Caco-2 (cell line): ENCODE measurements at regions of chr1 and their contacts with region 1.

Region 1: GRCh38 chr1:52404116-52404986 is at the starts of genes ORC1 and PRPF38A:
- DNase-seq: peak; percentile 93 to 94
- H3K4me3 ChIP-seq: peak within 1 kb of the TSS; percentile 60
- H3K4me3 Mint-ChIP-seq: peak within 1 kb of the TSS; percentile 87
- H3K27ac Mint-ChIP-seq: peak within 1 kb of the TSS; percentile 91
- H3K4me1 ChIP-seq: peaks cover 17% of the 10 kb centered on the region
- H3K4me1 Mint-ChIP-seq: no peaks in the 10 kb centered on the region
- H3K27me3 ChIP-seq: no peaks in the 10 kb centered on the region
- H3K27me3 Mint-ChIP-seq: no peaks in the 10 kb centered on the region
- CTCF ChIP-seq: peak; percentile 45 to 75
- total RNA-seq, gene ORC1: 12.1 and 14.0 TPM in 2 replicates
- total RNA-seq, gene PRPF38A: 40.4 and 43.1 TPM in 2 replicates

Region 2: GRCh38 chr1:52365746-52366516 is 38.4 kb before region 1 on chr1 and contains the start of gene CC2D1B:
- CTCF ChIA-PET with region 1: interaction called, 5 read pairs
- POLR2A ChIA-PET with region 1: interaction called, 5 read pairs
- intact Hi-C with region 1: loop called (anchors 1 kb)
- DNase-seq: peak; percentile 99
- H3K4me3 ChIP-seq: peak within 1 kb of the TSS; percentile 83
- H3K4me3 Mint-ChIP-seq: peak within 1 kb of the TSS; percentile 96
- H3K27ac Mint-ChIP-seq: peak within 1 kb of the TSS; percentile 95
- H3K4me1 ChIP-seq: peaks cover 6% of the 10 kb centered on the region; the same call in 1 of the 2 replicates
- H3K4me1 Mint-ChIP-seq: peaks cover 9% of the 10 kb centered on the region
- H3K27me3 ChIP-seq: no peaks in the 10 kb centered on the region
- H3K27me3 Mint-ChIP-seq: no peaks in the 10 kb centered on the region
- CTCF ChIP-seq: peak in 1 of 2 experiments; percentile 15
- total RNA-seq, gene CC2D1B: 31.1 and 32.4 TPM in 2 replicates

Region 3: GRCh38 chr1:52686830-52687229 is 282.5 kb after region 1 on chr1:
- CTCF ChIA-PET with region 1: interaction called, 6 read pairs
- POLR2A ChIA-PET with region 1: no interaction called
- intact Hi-C with region 1: loop called (anchors 5 kb)
- DNase-seq: no peak
- H3K4me3 ChIP-seq: no peak overlapping the region
- H3K4me3 Mint-ChIP-seq: no peak overlapping the region
- H3K27ac Mint-ChIP-seq: no peak overlapping the region
- H3K4me1 ChIP-seq: no peaks in the 10 kb centered on the region
- H3K4me1 Mint-ChIP-seq: no peaks in the 10 kb centered on the region
- H3K27me3 ChIP-seq: no peaks in the 10 kb centered on the region
- H3K27me3 Mint-ChIP-seq: no peaks in the 10 kb centered on the region
- CTCF ChIP-seq: no peak

Region 4: DNA sequence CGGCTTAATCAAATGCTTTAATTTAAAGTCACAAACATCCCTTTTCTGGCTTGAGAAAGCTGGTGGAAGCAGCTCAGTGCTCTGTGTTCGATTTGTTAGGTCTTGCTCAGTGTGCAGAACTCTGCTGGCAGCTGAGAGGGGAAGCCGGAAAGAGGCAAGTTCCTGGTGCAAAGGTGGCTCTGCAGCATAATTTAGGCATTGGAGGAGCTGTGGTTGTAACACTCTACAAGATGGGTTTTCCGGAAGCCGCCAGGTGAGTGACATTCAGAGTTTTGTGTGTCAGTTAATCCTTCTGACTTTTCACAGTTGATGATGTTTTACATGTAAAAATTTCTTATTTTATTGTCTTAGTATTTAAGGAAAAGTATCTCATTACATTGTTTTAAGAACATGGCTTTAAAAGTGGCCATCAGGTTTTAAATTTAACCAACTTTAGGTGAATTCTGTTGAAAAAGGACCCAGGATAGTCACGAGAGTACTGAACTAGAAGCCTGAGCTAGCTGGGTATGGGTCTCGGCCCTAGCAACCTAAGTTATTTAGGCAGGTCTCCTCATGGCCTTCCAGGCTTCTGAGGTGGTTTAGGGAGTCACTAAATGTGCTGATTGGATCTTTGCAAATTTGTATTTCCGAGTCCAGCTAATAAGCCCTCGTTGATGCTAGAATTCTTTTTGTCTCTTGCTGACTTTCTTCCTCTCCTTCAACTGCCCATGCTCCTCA is 610.6 kb after region 1 on chr1:
- CTCF ChIA-PET with region 1: no interaction called
- POLR2A ChIA-PET with region 1: interaction called, 13 read pairs
- intact Hi-C with region 1: no loop called
- DNase-seq: peak; percentile 86 to 90
- H3K4me3 ChIP-seq: peak overlapping the region; percentile 37
- H3K4me3 Mint-ChIP-seq: peak overlapping the region; percentile 92
- H3K27ac Mint-ChIP-seq: peak overlapping the region; percentile 86
- H3K4me1 ChIP-seq: peaks cover 4% of the 10 kb centered on the region; the same call in 1 of the 2 replicates
- H3K4me1 Mint-ChIP-seq: peaks cover 14% of the 10 kb centered on the region
- H3K27me3 ChIP-seq: no peaks in the 10 kb centered on the region
- H3K27me3 Mint-ChIP-seq: no peaks in the 10 kb centered on the region
- CTCF ChIP-seq: no peak